Activated naive CD8-positive, alpha-beta T cell treated with anti-CD3 and anti-CD28 coated beads, Interleukin-2, amount 10 ng/mL, durations not matched to agents 7 days and 5 days (primary cell): ENCODE measurements at regions of chr14 and their contacts with region 1.

Region 1: DNA sequence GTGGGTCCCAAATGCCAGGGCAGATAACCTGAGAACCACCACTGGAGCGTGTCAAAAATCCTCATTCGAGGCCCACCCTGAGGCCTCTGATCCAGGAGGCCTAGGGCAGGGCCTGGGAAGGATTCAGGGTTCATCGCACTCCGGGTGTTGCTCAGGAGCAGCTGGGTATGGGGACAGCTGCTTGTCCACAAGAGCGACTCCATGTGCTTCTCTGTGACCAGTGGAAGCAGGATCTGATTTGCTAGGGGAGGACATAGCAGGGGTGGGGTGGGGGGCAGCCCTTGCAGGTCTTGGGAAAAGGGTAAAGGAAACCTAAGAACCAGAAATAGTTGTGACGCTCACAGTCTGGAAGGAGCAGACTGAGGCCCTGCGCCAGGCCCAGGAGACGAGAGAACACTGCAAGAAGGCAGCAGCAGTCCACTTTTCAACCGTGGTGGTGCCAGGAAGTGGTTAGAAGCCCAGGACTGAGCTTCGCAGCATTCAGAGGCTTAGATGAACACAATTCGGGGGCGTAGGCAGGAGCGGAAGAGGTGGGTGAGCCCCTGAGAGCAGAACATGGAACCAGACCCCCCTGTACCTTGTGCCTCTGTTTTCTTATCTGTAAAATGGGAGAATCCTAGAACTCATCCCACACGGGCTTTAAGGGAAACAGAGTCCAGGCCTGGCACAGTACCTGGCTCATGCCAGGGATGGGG is 33.7 kb downstream of the ITPK1 start:
- DNase-seq: peak; percentile 63
- ATAC-seq: peak; percentile 84
- H3K4me3 Mint-ChIP-seq: peak overlapping the region; percentile 72
- H3K27ac Mint-ChIP-seq: peak overlapping the region; percentile 94
- H3K4me1 Mint-ChIP-seq: peaks cover 68% of the 10 kb centered on the region
- H3K27me3 Mint-ChIP-seq: no peaks in the 10 kb centered on the region

Region 2: DNA sequence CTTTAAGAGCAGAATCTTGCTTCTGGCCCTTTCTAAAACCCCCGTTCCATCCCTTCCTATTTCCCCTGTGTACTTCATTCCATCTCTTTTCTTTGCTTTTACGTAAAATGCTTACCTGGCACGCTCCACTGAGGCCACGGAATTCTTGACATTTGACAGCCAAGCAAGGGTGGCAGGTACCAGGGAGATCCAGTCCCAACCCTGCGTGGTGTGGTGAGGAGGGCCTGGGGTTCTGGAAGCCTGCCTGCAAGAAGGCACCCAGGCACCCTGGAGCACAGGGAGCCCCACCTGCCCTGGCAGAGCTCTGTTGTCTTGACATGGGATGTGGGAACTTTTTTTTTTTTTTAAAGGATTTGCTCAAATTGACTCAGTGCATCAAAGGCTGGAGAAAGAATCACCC is 14.9 kb before region 1 on chr14:
- POLR2A ChIA-PET with region 1: interaction called, 15 read pairs
- DNase-seq: no peak
- ATAC-seq: no peak
- H3K4me3 Mint-ChIP-seq: peak overlapping the region; percentile 75
- H3K27ac Mint-ChIP-seq: peak overlapping the region; percentile 98
- H3K4me1 Mint-ChIP-seq: peaks cover 65% of the 10 kb centered on the region
- H3K27me3 Mint-ChIP-seq: no peaks in the 10 kb centered on the region